PC-9 (cell line): ENCODE measurements at regions of chr16 and their contacts with region 1.

Region 1: GRCh38 chr16:19118938-19119431 is 5.2 kb downstream of the ITPRIPL2 start:
- DNase-seq: peak; percentile 73 to 84
- H3K4me3 ChIP-seq: peak overlapping the region; percentile 59
- H3K27ac ChIP-seq: peak overlapping the region; percentile 96
- H3K4me1 ChIP-seq: peaks cover 66% of the 10 kb centered on the region
- H3K27me3 ChIP-seq: no peaks in the 10 kb centered on the region
- CTCF ChIP-seq: no peak

Region 2: GRCh38 chr16:19062706-19063105 is 56.3 kb before region 1 on chr16:
- CTCF ChIA-PET with region 1: no interaction called
- POLR2A ChIA-PET with region 1: no interaction called
- intact Hi-C with region 1: no loop called
- DNase-seq: no peak
- H3K4me3 ChIP-seq: no peak overlapping the region
- H3K27ac ChIP-seq: no peak overlapping the region
- H3K4me1 ChIP-seq: no peaks in the 10 kb centered on the region
- H3K27me3 ChIP-seq: no peaks in the 10 kb centered on the region
- CTCF ChIP-seq: no peak

Region 3: GRCh38 chr16:19167710-19168370 is 48.9 kb after region 1 on chr16 and contains the start of gene SYT17:
- CTCF ChIA-PET with region 1: interaction called, 12 read pairs
- POLR2A ChIA-PET with region 1: interaction called, 21 read pairs
- intact Hi-C with region 1: loop called (anchors 1 kb)
- DNase-seq: peak; percentile 60 to 90
- H3K4me3 ChIP-seq: peak within 1 kb of the TSS; percentile 96
- H3K27ac ChIP-seq: 0 out of 2 replicates have a peak within 1 kb of the TSS, but pooled peaks have one; percentile 25
- H3K4me1 ChIP-seq: peaks cover 33% of the 10 kb centered on the region
- H3K27me3 ChIP-seq: no peaks in the 10 kb centered on the region
- CTCF ChIP-seq: peak; percentile 75
- total RNA-seq, gene SYT17: 36.6 and 45.2 TPM in 2 replicates